ENCODE measurements at regions of chr18 and their contacts with region 1.

Region 1: GRCh38 chr18:6437937-6438818 is 23.5 kb upstream of the L3MBTL4 start:
- DNase-seq: peak; percentile 6
- CTCF ChIP-seq: no peak

Region 2: DNA sequence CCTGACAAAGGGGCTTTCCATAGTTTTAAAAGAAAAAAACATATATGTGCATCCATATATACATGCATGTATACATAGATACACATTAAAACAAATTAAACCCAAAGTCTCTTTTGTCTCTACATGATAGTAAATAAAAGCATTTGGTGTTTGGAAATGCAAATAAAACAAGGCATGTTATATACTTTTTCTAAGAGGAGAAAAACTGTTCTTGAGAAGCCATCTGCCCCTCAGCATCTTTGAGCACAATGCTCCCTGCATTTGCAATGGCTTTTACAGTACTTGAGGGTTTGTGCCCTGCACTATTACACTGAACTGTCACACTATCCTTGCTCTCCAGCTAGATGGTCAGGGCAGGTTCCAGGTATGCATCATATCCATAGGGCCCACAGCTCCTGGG is 233.7 kb before region 1 on chr18:
- CTCF ChIA-PET with region 1: no interaction called
- POLR2A ChIA-PET with region 1: no interaction called
- DNase-seq: no peak
- CTCF ChIP-seq: no peak

Region 3: GRCh38 chr18:6452194-6452593 is 14.0 kb after region 1 on chr18:
- CTCF ChIA-PET with region 1: interaction called, 11 read pairs
- POLR2A ChIA-PET with region 1: no interaction called
- DNase-seq: no peak
- CTCF ChIP-seq: no peak